ENCODE measurements at regions of chr2 and their contacts with region 1.

Region 1: GRCh38 chr2:128090945-128091725 is at the start of gene UGGT1:
- DNase-seq: peak; percentile 94

Region 2: GRCh38 chr2:128008074-128008672 is 83.0 kb before region 1 on chr2:
- CTCF ChIA-PET with region 1: no interaction called
- POLR2A ChIA-PET with region 1: no interaction called
- DNase-seq: no peak

Region 3: DNA sequence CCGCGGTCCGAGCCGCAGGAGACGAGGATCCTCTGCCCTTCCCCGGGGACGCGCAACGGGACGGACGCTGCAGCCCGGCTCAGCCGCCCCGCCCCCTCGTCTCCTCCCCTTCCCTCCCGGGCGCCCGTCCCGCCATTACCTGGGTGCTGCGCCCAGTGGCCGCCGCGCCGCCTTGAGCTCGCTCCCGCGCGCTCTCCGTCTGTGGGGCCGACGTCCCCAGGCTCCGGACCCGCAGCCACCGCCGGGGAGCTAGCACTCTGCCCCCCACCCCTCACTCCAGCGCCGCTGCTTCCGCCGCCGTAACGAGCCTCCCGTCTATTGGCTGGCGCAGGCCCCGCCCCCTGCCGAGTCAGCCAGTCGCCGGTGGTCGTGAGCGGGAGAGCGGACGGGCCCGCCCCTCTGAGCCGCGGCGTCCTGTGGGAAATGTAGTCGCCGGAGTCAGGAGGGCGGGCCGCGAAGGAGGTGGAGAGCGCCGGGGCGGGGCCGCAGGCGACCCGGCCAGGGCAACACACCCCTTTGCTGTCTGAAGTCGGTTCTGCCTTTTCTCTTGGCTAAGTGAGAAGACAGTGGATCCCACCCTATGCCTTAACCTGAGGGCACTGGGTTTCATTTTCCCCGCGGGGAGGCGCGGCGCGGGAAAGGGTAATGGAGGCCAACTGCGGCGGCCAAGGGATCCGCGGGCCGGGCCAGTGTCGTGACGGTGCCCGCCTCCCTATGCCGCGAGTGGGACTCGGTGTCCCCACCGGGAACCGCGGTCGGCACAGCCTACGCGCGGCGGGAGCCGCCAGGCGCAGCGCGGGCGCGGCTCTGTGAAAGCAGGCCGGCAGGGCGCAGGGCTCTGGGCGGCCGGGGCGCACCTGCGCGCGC is 63.1 kb before region 1 on chr2 and contains the start of gene SAP130:
- CTCF ChIA-PET with region 1: no interaction called
- POLR2A ChIA-PET with region 1: interaction called, 14 read pairs
- DNase-seq: peak; percentile 94

Region 4: GRCh38 chr2:128103407-128103806 is 12.3 kb after region 1 on chr2:
- CTCF ChIA-PET with region 1: interaction called, 5 read pairs
- POLR2A ChIA-PET with region 1: interaction called, 20 read pairs
- DNase-seq: no peak